ENCODE measurements at regions of chr11 and their contacts with region 1.

Region 1: GRCh38 chr11:126700773-126701519 is 299.6 kb downstream of the KIRREL3 start:
- DNase-seq: no peak
- H3K4me3 ChIP-seq: no peak overlapping the region
- H3K27ac ChIP-seq: no peak overlapping the region
- H3K4me1 ChIP-seq: no peaks in the 10 kb centered on the region
- H3K27me3 ChIP-seq: no peaks in the 10 kb centered on the region
- CTCF ChIP-seq: no peak
- POLR2A ChIP-seq: no peak

Region 2: GRCh38 chr11:126525216-126525615 is 175.7 kb before region 1 on chr11:
- intact Hi-C with region 1: no loop called
- DNase-seq: no peak
- H3K4me3 ChIP-seq: no peak overlapping the region
- H3K27ac ChIP-seq: no peak overlapping the region
- H3K4me1 ChIP-seq: no peaks in the 10 kb centered on the region
- H3K27me3 ChIP-seq: no peaks in the 10 kb centered on the region
- CTCF ChIP-seq: no peak
- POLR2A ChIP-seq: no peak

Region 3: DNA sequence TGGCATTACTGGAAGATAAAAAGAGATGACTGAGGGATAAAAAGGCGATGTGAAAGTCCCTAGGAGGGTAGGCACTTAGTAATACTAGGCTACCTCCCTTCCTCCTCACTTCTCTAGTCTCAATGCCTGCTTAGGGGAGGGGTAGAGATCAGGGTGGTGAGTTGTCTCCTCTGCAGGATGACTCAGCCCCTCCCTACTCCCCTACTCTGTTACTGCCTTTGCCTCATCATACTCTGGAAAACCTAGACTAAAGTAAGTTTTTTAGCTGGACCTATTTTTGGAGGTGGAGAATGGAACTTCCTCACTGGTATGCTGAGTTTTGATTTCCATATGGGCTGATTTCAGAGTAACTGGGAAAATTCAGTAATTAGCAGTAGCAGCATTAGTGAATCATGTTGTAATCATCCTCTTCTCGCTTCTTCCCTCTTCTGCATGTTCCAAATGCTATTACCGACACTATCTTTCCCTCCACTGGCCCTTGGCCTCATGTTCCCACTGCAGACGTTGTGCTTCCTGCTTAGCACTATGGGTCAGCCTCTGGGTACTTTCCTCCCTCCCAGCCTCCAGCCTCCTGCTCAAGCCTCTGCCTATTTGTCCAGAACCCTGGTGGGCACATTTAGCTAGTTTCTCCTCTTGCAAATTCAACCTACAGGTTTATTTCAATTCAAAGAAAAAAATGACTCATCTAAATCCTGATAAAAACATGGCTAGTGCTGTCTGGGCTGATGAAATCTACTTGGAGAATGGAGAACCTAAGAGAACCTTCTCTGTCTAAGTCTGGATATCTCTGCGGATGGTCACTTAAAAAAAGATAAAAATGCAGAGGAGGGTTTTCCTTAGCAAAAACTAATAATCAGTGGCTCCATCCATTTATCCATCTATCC is 63.8 kb before region 1 on chr11:
- intact Hi-C with region 1: no loop called
- DNase-seq: no peak
- H3K4me3 ChIP-seq: no peak overlapping the region
- H3K27ac ChIP-seq: no peak overlapping the region
- H3K4me1 ChIP-seq: no peaks in the 10 kb centered on the region
- H3K27me3 ChIP-seq: peaks cover 0 to 10% of the 10 kb centered on the region in 2 donors
- CTCF ChIP-seq: no peak
- POLR2A ChIP-seq: no peak

Region 4: GRCh38 chr11:126716456-126717083 is 15.6 kb after region 1 on chr11:
- intact Hi-C with region 1: loop called (anchors 1 kb)
- DNase-seq: no peak
- H3K4me3 ChIP-seq: no peak overlapping the region
- H3K27ac ChIP-seq: no peak overlapping the region
- H3K4me1 ChIP-seq: no peaks in the 10 kb centered on the region
- H3K27me3 ChIP-seq: no peaks in the 10 kb centered on the region
- CTCF ChIP-seq: peak in 1 of 3 donors; percentile 35
- POLR2A ChIP-seq: no peak

Region 5: GRCh38 chr11:126816645-126817044 is 115.7 kb after region 1 on chr11:
- intact Hi-C with region 1: no loop called
- DNase-seq: no peak
- H3K4me3 ChIP-seq: no peak overlapping the region
- H3K27ac ChIP-seq: no peak overlapping the region
- H3K4me1 ChIP-seq: no peaks in the 10 kb centered on the region
- H3K27me3 ChIP-seq: no peaks in the 10 kb centered on the region
- CTCF ChIP-seq: no peak
- POLR2A ChIP-seq: no peak